Cardiac septum (tissue), 1 donor: ENCODE measurements at regions of chr3 and their contacts with region 1.

Region 1: GRCh38 chr3:8954938-8955763 is 8.1 kb downstream of the RAD18 start:
- DNase-seq: no peak

Region 2: GRCh38 chr3:8769088-8769822 is 185.9 kb before region 1 on chr3 and contains the start of gene OXTR:
- intact Hi-C with region 1: loop called (anchors 10 kb)
- DNase-seq: no peak
- total RNA-seq, gene OXTR: 0.30 TPM